ENCODE measurements at regions of chr3 and their contacts with region 1.

Region 1: DNA sequence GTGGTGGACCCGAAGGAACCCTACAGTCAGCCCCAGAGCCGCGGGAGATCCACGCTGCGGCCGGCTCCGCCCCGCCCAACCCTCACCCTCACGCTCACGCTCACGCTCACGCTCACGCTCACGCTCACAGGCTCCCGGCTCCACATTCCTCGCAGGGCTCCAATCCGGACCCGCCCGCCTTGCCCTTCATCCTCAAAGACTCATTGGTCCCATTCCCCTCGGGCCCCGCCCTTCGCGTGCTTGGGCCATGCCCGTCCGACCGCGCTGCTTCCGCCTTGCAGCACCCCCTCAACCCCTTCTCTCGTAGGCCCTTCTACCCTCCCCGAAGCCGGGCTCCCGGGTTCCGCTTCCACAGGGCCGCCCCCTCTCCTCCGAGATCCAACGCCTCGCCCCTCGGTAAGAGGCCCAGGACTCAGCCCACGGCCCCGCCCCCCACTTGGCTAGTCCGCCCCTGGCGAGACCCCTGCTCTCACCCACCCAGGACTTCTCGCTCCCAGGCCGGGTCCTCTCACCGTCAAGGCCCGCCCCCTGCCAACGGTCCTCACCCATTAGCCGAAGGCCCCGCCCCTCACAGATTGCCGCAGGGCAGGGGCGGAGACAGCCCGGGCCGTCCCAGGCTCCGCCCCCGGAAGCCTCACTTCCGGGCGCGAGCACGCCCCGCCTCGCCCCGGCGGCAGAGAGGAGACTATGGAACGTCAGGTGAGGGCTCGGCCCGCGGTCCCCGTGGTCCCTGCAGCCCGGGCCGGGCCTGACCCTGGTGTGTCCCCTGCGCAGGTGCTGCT is at the start of gene APEH:
- DNase-seq: peak; percentile 92 to 99 (median 97)
- ATAC-seq: peak; percentile 85
- H3K4me3 ChIP-seq: peak within 1 kb of the TSS; percentile 78 to 92
- H3K4me3 Mint-ChIP-seq: peak within 1 kb of the TSS; percentile 95
- H3K27ac ChIP-seq: peak within 1 kb of the TSS; percentile 86 to 98
- H3K27ac Mint-ChIP-seq: peak within 1 kb of the TSS; percentile 97
- H3K4me1 ChIP-seq: peaks cover 20% of the 10 kb centered on the region
- H3K4me1 Mint-ChIP-seq: peaks cover 36% of the 10 kb centered on the region
- H3K27me3 ChIP-seq: no peaks in the 10 kb centered on the region
- H3K27me3 Mint-ChIP-seq: no peaks in the 10 kb centered on the region
- CTCF ChIP-seq: no peak
- total RNA-seq, gene APEH: 40.8 to 48.9 TPM

Region 2: DNA sequence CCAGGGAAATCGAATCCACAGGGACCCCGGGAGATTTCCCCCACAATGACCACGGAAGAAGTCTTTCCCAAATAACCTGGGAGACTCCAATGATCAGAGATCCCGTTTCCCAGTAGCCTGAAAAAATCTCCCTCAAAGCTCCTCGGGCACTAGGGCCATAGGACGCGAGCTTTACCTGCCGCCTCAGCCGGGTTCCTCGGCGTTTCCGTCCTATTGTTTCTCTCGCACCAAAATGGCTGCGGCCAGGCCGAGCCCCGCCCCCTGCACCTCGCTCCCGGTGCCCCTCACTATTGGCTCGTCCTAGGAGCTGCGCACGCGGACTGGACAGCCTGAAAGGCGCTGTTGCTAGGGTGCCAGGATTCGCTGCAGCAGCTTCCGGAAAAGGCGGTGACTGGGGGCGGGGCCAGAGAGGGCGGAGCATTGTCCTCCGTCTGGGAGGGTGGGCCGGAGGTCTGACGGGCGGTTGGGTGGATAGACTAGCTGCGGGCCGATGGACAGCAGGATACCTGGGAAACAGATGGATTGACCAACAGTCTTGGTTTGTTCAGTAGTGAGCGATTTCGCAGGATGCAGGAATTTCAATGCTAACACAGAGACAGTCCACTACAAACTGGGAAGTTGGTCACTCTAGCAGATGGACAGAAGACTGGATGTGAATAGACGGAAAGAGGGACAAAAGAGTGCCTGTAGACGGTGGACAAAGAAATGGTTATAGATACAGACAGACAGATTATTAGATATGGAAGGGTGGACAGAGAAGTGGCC is 956.7 kb before region 1 on chr3 and contains the start of gene IP6K2:
- CTCF ChIA-PET with region 1: no interaction called
- POLR2A ChIA-PET with region 1: no interaction called
- intact Hi-C with region 1: loop called in 1 of 2 experiments (anchors 5 kb)
- DNase-seq: peak; percentile 97 to 99 (median 99)
- ATAC-seq: peak; percentile 99
- H3K4me3 ChIP-seq: peak within 1 kb of the TSS; percentile 90 to 100
- H3K4me3 Mint-ChIP-seq: peak within 1 kb of the TSS; percentile 99
- H3K27ac ChIP-seq: peak within 1 kb of the TSS; percentile 87 to 97
- H3K27ac Mint-ChIP-seq: peak within 1 kb of the TSS; percentile 97
- H3K4me1 ChIP-seq: peaks cover 27% of the 10 kb centered on the region
- H3K4me1 Mint-ChIP-seq: peaks cover 48% of the 10 kb centered on the region
- H3K27me3 ChIP-seq: no peaks in the 10 kb centered on the region
- H3K27me3 Mint-ChIP-seq: no peaks in the 10 kb centered on the region
- CTCF ChIP-seq: no peak
- total RNA-seq, gene IP6K2: 118 to 123 TPM

Region 3: DNA sequence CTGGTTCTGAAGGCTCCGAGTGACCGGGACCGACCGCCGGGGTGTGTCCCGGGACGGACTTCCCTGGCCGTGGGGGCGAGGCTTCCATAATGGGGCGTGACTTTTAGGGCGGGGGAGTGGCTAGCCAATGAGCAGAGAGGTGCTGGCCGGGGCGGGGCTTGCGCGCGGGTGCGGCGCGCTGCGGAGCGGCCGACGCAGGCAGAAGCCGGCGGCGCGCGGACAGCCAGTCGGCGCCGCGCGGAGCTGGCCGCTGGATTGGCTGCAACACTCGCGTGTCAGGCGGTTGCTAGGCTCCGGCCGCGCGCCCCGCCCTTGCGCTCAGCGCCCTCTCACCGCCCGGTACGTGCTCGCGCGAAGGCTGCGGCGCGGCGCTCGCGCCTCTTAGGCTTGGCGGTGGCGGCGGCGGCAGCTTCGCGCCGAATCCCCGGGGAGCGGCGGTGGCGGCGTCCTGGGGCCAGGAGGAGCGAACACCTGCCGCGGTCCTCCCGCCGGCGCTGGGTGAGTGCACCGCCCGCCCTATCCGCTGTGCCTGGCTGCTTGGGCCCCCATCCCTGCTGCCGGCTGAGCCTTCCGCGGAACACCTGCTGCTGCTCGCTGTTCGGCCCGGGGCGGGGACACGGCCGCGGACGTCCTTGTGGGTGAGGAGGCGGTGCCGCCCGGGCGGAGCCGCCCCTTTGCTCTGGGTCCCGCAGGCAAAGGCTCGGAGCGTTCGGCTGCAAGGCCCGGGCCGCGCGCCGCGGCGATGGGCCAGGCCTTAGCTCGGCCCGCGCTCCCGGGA is 203.8 kb before region 1 on chr3 and contains the start of gene DAG1:
- CTCF ChIA-PET with region 1: no interaction called
- POLR2A ChIA-PET with region 1: no interaction called
- intact Hi-C with region 1: loop called (anchors 1 kb)
- DNase-seq: peak; percentile 89 to 99 (median 95)
- ATAC-seq: peak; percentile 85
- H3K4me3 ChIP-seq: peak within 1 kb of the TSS; percentile 83 to 97
- H3K4me3 Mint-ChIP-seq: peak within 1 kb of the TSS; percentile 88
- H3K27ac ChIP-seq: peak within 1 kb of the TSS; percentile 86 to 87
- H3K27ac Mint-ChIP-seq: peak within 1 kb of the TSS; percentile 94
- H3K4me1 ChIP-seq: peaks cover 21% of the 10 kb centered on the region
- H3K4me1 Mint-ChIP-seq: peaks cover 24% of the 10 kb centered on the region
- H3K27me3 ChIP-seq: no peaks in the 10 kb centered on the region
- H3K27me3 Mint-ChIP-seq: no peaks in the 10 kb centered on the region
- CTCF ChIP-seq: no peak
- total RNA-seq, gene DAG1: 17.0 to 19.9 TPM

Region 4: DNA sequence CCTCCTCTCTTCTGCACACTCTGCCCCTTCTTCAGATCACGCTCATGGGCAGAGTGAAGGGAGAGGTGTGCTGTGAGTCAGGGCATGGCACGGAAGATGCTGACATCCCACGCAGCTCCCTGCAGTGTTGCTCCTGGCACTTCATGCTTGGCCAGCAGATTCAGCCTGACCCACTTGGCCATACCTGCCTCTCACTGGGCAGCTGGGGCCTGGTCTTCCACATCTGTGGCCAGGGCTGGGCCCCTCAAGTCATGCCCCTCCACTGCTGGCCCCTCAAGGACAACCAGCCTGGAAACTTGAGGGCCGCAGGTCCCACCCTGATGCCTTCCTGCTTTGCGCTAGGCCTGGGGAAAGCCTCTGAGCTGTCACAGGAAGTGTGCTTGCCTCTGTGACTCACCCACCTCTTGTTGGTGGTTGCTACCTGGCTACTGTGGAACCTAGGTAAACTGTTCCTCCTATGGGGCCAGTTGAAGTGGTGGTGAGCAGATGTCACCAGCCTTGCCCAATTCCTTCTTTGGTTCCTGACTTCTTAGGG is 71.0 kb before region 1 on chr3:
- CTCF ChIA-PET with region 1: no interaction called
- POLR2A ChIA-PET with region 1: no interaction called
- intact Hi-C with region 1: loop called in 1 of 2 experiments (anchors 5 kb)
- DNase-seq: peak; percentile 6 to 78 (median 64)
- ATAC-seq: peak; percentile 96
- H3K4me3 ChIP-seq: no peak overlapping the region
- H3K4me3 Mint-ChIP-seq: no peak overlapping the region
- H3K27ac ChIP-seq: peak overlapping the region in 1 of 2 experiments; percentile 67
- H3K27ac Mint-ChIP-seq: peak overlapping the region; percentile 88
- H3K4me1 ChIP-seq: peaks cover 12% of the 10 kb centered on the region
- H3K4me1 Mint-ChIP-seq: peaks cover 18% of the 10 kb centered on the region
- H3K27me3 ChIP-seq: no peaks in the 10 kb centered on the region
- H3K27me3 Mint-ChIP-seq: no peaks in the 10 kb centered on the region
- CTCF ChIP-seq: no peak

Region 5: DNA sequence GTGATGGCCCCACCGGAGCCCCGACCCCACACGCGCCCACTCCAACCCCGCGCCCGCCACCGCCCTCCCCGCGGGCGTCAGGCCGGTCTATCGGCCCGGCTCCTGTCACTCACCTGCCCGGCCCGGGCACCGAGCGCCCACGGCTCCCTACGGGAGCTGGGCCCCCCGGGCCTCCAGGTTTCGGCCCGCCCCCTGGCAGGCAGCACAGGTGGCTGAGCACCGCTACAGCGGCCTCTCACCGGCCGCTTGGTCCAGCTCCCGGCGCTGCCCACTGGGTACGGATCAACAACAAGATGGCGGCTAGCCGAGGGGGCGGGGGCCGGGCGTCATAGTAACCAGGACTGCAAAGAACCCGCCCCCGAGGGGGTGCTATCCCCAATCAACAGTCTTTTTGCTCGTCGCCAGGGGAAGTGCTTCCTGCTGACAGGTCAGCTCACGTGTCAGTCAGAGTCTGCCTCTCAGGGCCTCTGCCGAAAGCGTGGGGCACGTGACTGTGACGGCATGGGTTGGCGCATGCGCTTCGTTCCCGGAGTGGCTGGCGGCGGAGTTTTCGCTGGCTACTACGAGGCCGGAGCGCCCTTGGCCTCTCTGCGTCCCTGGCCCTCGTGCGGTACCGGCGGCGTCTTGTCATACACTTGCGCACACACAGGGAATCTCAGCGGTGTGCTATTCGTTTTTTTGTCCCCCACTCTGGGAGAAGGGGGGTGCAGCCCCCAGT is 112.5 kb after region 1 on chr3 and contains the start of gene IP6K1:
- CTCF ChIA-PET with region 1: no interaction called
- POLR2A ChIA-PET with region 1: no interaction called
- intact Hi-C with region 1: loop called in 1 of 2 experiments (anchors 5 kb)
- DNase-seq: peak; percentile 98 to 100 (median 99)
- ATAC-seq: peak; percentile 98
- H3K4me3 ChIP-seq: peak within 1 kb of the TSS; percentile 86 to 87
- H3K4me3 Mint-ChIP-seq: peak within 1 kb of the TSS; percentile 95
- H3K27ac ChIP-seq: peak within 1 kb of the TSS; percentile 87 to 94
- H3K27ac Mint-ChIP-seq: peak within 1 kb of the TSS; percentile 99
- H3K4me1 ChIP-seq: peaks cover 29% of the 10 kb centered on the region
- H3K4me1 Mint-ChIP-seq: peaks cover 40% of the 10 kb centered on the region
- H3K27me3 ChIP-seq: no peaks in the 10 kb centered on the region
- H3K27me3 Mint-ChIP-seq: no peaks in the 10 kb centered on the region
- CTCF ChIP-seq: no peak
- total RNA-seq, gene IP6K1: 34.3 to 36.6 TPM

Region 6: GRCh38 chr3:50235716-50236496 is 562.0 kb after region 1 on chr3 and contains the start of gene GNAI2:
- CTCF ChIA-PET with region 1: no interaction called
- POLR2A ChIA-PET with region 1: no interaction called
- intact Hi-C with region 1: loop called in 1 of 2 experiments (anchors 5 kb)
- DNase-seq: peak; percentile 98 to 99 (median 98)
- ATAC-seq: peak; percentile 85
- H3K4me3 ChIP-seq: peak within 1 kb of the TSS; percentile 94 to 100
- H3K4me3 Mint-ChIP-seq: peak within 1 kb of the TSS; percentile 96
- H3K27ac ChIP-seq: peak within 1 kb of the TSS; percentile 72 to 83
- H3K27ac Mint-ChIP-seq: peak within 1 kb of the TSS; percentile 96
- H3K4me1 ChIP-seq: peaks cover 38% of the 10 kb centered on the region
- H3K4me1 Mint-ChIP-seq: peaks cover 33% of the 10 kb centered on the region
- H3K27me3 ChIP-seq: no peaks in the 10 kb centered on the region
- H3K27me3 Mint-ChIP-seq: no peaks in the 10 kb centered on the region
- CTCF ChIP-seq: no peak
- total RNA-seq, gene GNAI2: 185 to 192 TPM

Measured in CD8-positive, alpha-beta T cell (primary cell).